ENCODE measurements at regions of chr2 and their contacts with region 1.

Region 1: GRCh38 chr2:44361330-44362206 is at the starts of genes CAMKMT and PREPL:
- DNase-seq: peak; percentile 95 to 98 (median 97)
- H3K4me3 ChIP-seq: peak within 1 kb of the TSS; percentile 89 to 94 (median 93)
- H3K4me3 Mint-ChIP-seq: peak within 1 kb of the TSS; percentile 100
- H3K27ac ChIP-seq: peak within 1 kb of the TSS; percentile 77 to 100
- H3K27ac Mint-ChIP-seq: peak within 1 kb of the TSS; percentile 99 to 100 (median 99)
- H3K4me1 ChIP-seq: peaks cover 15 to 16% of the 10 kb centered on the region in 2 donors
- H3K4me1 Mint-ChIP-seq: peaks cover 22% of the 10 kb centered on the region
- H3K27me3 ChIP-seq: no peaks in the 10 kb centered on the region
- H3K27me3 Mint-ChIP-seq: peaks cover 0 to 2% (median 0%) of the 10 kb centered on the region in 3 donors
- CTCF ChIP-seq: no peak
- polyA plus RNA-seq, gene CAMKMT: 4.7 to 7.8 (median 7.0) TPM
- polyA plus RNA-seq, gene PREPL: 2.6 to 10.8 (median 8.0) TPM

Region 2: GRCh38 chr2:43595603-43596412 is 765.8 kb before region 1 on chr2 and contains the start of gene THADA:
- intact Hi-C with region 1: loop called in 1 of 2 experiments (anchors 10 kb)
- DNase-seq: peak; percentile 98 to 99 (median 98)
- H3K4me3 ChIP-seq: peak within 1 kb of the TSS; percentile 78 to 98 (median 91)
- H3K4me3 Mint-ChIP-seq: peak within 1 kb of the TSS; percentile 92 to 95
- H3K27ac ChIP-seq: peak within 1 kb of the TSS; percentile 78 to 96
- H3K27ac Mint-ChIP-seq: peak within 1 kb of the TSS; percentile 93 to 98 (median 97)
- H3K4me1 ChIP-seq: peaks cover 16 to 22% of the 10 kb centered on the region in 2 donors
- H3K4me1 Mint-ChIP-seq: peaks cover 21% of the 10 kb centered on the region
- H3K27me3 ChIP-seq: no peaks in the 10 kb centered on the region
- H3K27me3 Mint-ChIP-seq: peaks cover 2 to 8% (median 3%) of the 10 kb centered on the region in 3 donors
- CTCF ChIP-seq: no peak
- polyA plus RNA-seq, gene THADA: 7.3 to 11.2 (median 9.7) TPM

Measured in CD14-positive monocyte (primary cell).